ENCODE measurements at regions of chr1 and their contacts with region 1.

Region 1: GRCh38 chr1:84143796-84144565 is at the start of gene PRKACB:
- DNase-seq: peak in 5 of 14 experiments; percentile 7 to 81 (median 76)
- ATAC-seq: peak; percentile 87
- H3K4me3 ChIP-seq: peak within 1 kb of the TSS; percentile 57
- H3K4me3 Mint-ChIP-seq: peak within 1 kb of the TSS; percentile 100
- H3K27ac ChIP-seq: peak within 1 kb of the TSS; percentile 49 to 63
- H3K27ac Mint-ChIP-seq: peak within 1 kb of the TSS; percentile 99
- H3K4me1 ChIP-seq: peaks cover 8% of the 10 kb centered on the region
- H3K4me1 Mint-ChIP-seq: peaks cover 63% of the 10 kb centered on the region
- H3K27me3 ChIP-seq: no peaks in the 10 kb centered on the region
- H3K27me3 Mint-ChIP-seq: no peaks in the 10 kb centered on the region
- CTCF ChIP-seq: no peak
- total RNA-seq, gene PRKACB: 49.7 to 52.4 TPM

Region 2: DNA sequence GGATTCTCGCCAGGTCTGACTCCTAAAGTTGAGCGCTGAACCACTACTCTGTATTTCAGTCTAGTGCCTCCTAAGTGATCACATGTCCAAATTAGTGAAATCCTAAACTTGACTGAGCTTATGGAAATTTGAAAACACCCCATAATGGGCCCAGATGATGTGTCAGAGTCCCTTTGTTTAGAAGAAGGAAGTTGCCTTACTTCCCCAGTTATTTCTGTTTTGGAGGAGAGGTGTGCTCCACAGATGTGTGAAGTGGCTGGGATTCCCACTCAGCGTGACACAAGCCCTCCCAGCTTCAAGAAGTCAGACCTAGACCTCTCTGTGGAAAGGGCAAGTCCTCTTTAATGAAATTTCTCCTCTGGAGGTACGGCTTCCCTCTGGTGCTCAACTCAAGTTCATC is 333.8 kb before region 1 on chr1:
- CTCF ChIA-PET with region 1: no interaction called
- POLR2A ChIA-PET with region 1: no interaction called
- intact Hi-C with region 1: no loop called
- DNase-seq: no peak
- ATAC-seq: no peak
- H3K4me3 ChIP-seq: no peak overlapping the region
- H3K4me3 Mint-ChIP-seq: no peak overlapping the region
- H3K27ac ChIP-seq: no peak overlapping the region
- H3K27ac Mint-ChIP-seq: no peak overlapping the region
- H3K4me1 ChIP-seq: no peaks in the 10 kb centered on the region
- H3K4me1 Mint-ChIP-seq: no peaks in the 10 kb centered on the region
- H3K27me3 ChIP-seq: no peaks in the 10 kb centered on the region
- H3K27me3 Mint-ChIP-seq: no peaks in the 10 kb centered on the region
- CTCF ChIP-seq: no peak

Region 3: DNA sequence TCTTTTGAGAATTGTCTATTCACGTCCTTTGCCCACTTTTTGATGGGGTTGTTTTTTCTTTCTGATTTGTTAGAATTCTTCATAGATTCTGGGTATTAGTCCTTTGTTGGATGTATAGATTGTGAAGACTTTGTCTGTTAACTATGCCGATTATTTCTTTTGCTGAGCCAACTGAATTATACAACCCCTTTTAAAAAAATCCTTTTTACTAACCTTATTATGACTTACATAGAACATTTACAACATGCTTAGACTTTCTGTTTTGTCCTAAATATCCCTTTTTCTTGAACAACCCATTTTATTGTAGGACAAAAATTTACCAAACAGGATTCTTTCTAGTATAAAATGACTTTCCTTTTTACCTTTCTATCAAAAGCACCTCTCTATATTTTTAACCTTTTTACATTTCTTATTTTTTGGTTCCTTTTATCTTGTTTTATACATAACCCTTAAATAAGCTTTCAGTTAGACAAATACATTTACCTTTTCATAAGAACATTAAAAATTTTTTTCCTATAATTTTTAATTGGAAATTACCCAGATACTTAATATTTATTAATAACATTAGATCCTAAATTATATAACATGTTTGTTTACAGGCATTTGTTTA is 74.6 kb before region 1 on chr1:
- CTCF ChIA-PET with region 1: no interaction called
- POLR2A ChIA-PET with region 1: no interaction called
- intact Hi-C with region 1: no loop called
- DNase-seq: no peak
- ATAC-seq: no peak
- H3K4me3 ChIP-seq: no peak overlapping the region
- H3K4me3 Mint-ChIP-seq: no peak overlapping the region
- H3K27ac ChIP-seq: no peak overlapping the region
- H3K27ac Mint-ChIP-seq: no peak overlapping the region
- H3K4me1 ChIP-seq: no peaks in the 10 kb centered on the region
- H3K4me1 Mint-ChIP-seq: no peaks in the 10 kb centered on the region
- H3K27me3 ChIP-seq: peaks cover 2 to 3% of the 10 kb centered on the region in 2 experiments
- H3K27me3 Mint-ChIP-seq: peaks cover 31% of the 10 kb centered on the region
- CTCF ChIP-seq: no peak

Region 4: DNA sequence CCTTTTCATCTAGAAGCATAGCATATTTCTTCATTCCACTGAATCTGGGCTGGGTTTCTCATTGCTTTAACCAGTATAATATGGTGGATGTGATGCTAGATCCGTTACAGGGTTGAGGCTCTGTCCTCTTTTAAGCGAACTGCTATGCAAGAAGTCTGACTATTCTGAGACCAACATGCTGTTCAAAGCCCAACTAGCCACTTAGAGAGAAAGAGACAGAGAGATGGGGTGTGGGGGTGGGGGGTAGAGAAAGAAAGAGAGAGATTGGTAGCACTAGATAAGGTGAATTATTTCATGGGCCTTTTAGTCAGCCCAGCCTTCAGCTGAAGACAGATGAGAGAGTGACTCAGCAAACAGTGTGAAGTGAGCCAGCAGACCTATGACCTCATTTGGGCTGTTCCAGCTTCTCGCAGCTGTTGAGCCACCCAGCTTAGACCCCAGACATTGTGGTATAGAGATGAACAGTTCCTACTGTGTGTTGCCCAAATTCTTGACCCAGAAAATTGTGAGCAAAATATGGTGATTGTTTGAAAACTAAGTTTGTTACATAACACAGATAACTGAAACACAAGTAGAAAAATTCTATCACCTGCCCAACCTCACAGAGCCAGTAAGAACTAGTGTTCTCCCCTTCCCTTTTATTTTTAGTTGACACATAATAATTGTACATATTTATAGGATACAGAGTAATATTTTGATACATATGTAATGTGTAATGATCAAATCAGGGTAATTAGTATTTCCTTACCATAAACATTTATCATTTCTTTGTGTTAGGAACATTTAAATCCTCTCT is 40.6 kb before region 1 on chr1:
- CTCF ChIA-PET with region 1: no interaction called
- POLR2A ChIA-PET with region 1: no interaction called
- intact Hi-C with region 1: no loop called
- DNase-seq: peak in 2 of 14 experiments; percentile 4 to 20
- ATAC-seq: no peak
- H3K4me3 ChIP-seq: no peak overlapping the region
- H3K4me3 Mint-ChIP-seq: no peak overlapping the region
- H3K27ac ChIP-seq: no peak overlapping the region
- H3K27ac Mint-ChIP-seq: no peak overlapping the region
- H3K4me1 ChIP-seq: no peaks in the 10 kb centered on the region
- H3K4me1 Mint-ChIP-seq: no peaks in the 10 kb centered on the region
- H3K27me3 ChIP-seq: no peaks in the 10 kb centered on the region
- H3K27me3 Mint-ChIP-seq: no peaks in the 10 kb centered on the region
- CTCF ChIP-seq: no peak

Region 5: GRCh38 chr1:84156210-84156621 is 12.2 kb after region 1 on chr1:
- CTCF ChIA-PET with region 1: interaction called, 4 read pairs
- POLR2A ChIA-PET with region 1: interaction called, 29 read pairs
- intact Hi-C with region 1: loop called in 1 of 2 experiments (anchors 1 kb)
- DNase-seq: peak in 3 of 14 experiments; percentile 20 to 35 (median 31)
- ATAC-seq: peak; percentile 48
- H3K4me3 ChIP-seq: no peak overlapping the region
- H3K4me3 Mint-ChIP-seq: peak overlapping the region; percentile 45
- H3K27ac ChIP-seq: no peak overlapping the region
- H3K27ac Mint-ChIP-seq: peak overlapping the region; percentile 72
- H3K4me1 ChIP-seq: peaks cover 26% of the 10 kb centered on the region
- H3K4me1 Mint-ChIP-seq: peaks cover 97% of the 10 kb centered on the region
- H3K27me3 ChIP-seq: no peaks in the 10 kb centered on the region
- H3K27me3 Mint-ChIP-seq: no peaks in the 10 kb centered on the region
- CTCF ChIP-seq: no peak

Region 6: GRCh38 chr1:84217239-84217638 is 73.3 kb after region 1 on chr1:
- CTCF ChIA-PET with region 1: no interaction called
- POLR2A ChIA-PET with region 1: interaction called, 3 read pairs
- intact Hi-C with region 1: loop called in 1 of 2 experiments (anchors 5 kb)
- DNase-seq: no peak
- ATAC-seq: no peak
- H3K4me3 ChIP-seq: no peak overlapping the region
- H3K4me3 Mint-ChIP-seq: no peak overlapping the region
- H3K27ac ChIP-seq: no peak overlapping the region
- H3K27ac Mint-ChIP-seq: peak overlapping the region; percentile 2
- H3K4me1 ChIP-seq: no peaks in the 10 kb centered on the region
- H3K4me1 Mint-ChIP-seq: peaks cover 46% of the 10 kb centered on the region
- H3K27me3 ChIP-seq: no peaks in the 10 kb centered on the region
- H3K27me3 Mint-ChIP-seq: no peaks in the 10 kb centered on the region
- CTCF ChIP-seq: no peak

Region 7: GRCh38 chr1:84433258-84434080 is 289.5 kb after region 1 on chr1:
- CTCF ChIA-PET with region 1: interaction called, 24 read pairs
- POLR2A ChIA-PET with region 1: interaction called, 87 read pairs
- intact Hi-C with region 1: loop called (anchors 1 to 2 kb)
- DNase-seq: peak in 12 of 14 experiments; percentile 21 to 91 (median 40)
- ATAC-seq: peak; percentile 79
- H3K4me3 ChIP-seq: peak overlapping the region; percentile 32
- H3K4me3 Mint-ChIP-seq: peak overlapping the region; percentile 68
- H3K27ac ChIP-seq: peak overlapping the region in 1 of 2 donors; percentile 39
- H3K27ac Mint-ChIP-seq: no peak overlapping the region
- H3K4me1 ChIP-seq: peaks cover 25% of the 10 kb centered on the region
- H3K4me1 Mint-ChIP-seq: peaks cover 11% of the 10 kb centered on the region
- H3K27me3 ChIP-seq: no peaks in the 10 kb centered on the region
- H3K27me3 Mint-ChIP-seq: no peaks in the 10 kb centered on the region
- CTCF ChIP-seq: peak; percentile 85

Region 8: DNA sequence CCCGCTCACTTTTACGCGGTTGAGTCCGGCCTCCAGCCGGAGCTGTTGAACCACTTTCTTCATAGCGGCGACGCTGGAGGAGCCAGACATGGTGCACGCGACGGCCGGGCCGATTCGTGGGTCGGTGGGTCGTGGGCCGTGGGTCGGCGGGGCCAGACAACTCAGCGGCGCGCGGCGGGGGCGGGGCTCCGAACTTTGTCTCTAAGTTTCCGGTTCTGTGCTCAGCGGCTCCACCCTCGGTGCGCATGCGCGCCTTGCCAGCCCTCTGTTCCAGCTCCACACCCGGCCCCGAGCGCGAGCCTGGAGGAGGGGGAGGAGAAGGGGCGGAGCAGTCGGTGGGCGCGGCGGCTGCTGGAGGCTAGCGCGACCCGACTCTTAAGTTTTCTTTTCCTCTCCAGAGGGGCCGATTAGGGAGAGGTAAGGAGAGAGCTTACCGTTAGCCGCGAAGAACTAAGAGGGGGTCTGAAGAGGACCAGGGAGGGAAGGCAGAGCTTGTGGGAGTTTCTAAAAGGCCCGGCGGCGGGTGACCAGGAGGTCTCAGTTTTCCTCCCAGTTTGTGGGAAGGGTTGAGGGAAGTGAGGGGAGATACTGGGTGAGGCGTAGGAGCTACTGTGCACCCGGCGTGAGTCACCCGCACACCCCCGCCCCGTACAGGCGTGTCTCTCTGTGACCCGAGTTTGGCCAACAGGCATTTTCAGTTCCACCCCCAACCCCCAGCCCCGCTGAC is 362.2 kb after region 1 on chr1 and contains the starts of genes GNG5 and SPATA1:
- CTCF ChIA-PET with region 1: interaction called, 3 read pairs
- POLR2A ChIA-PET with region 1: interaction called, 27 read pairs
- intact Hi-C with region 1: loop called (anchors 10 kb)
- DNase-seq: peak; percentile 94 to 99 (median 97)
- ATAC-seq: peak; percentile 92
- H3K4me3 ChIP-seq: peak within 1 kb of the TSS; percentile 95
- H3K4me3 Mint-ChIP-seq: peak within 1 kb of the TSS; percentile 96
- H3K27ac ChIP-seq: peak within 1 kb of the TSS; percentile 75 to 91
- H3K27ac Mint-ChIP-seq: peak within 1 kb of the TSS; percentile 88
- H3K4me1 ChIP-seq: peaks cover 21% of the 10 kb centered on the region
- H3K4me1 Mint-ChIP-seq: peaks cover 62% of the 10 kb centered on the region
- H3K27me3 ChIP-seq: no peaks in the 10 kb centered on the region
- H3K27me3 Mint-ChIP-seq: no peaks in the 10 kb centered on the region
- CTCF ChIP-seq: no peak
- total RNA-seq, gene GNG5: 23.6 to 24.6 TPM
- total RNA-seq, gene SPATA1: 0.11 to 0.61 TPM

Region 9: DNA sequence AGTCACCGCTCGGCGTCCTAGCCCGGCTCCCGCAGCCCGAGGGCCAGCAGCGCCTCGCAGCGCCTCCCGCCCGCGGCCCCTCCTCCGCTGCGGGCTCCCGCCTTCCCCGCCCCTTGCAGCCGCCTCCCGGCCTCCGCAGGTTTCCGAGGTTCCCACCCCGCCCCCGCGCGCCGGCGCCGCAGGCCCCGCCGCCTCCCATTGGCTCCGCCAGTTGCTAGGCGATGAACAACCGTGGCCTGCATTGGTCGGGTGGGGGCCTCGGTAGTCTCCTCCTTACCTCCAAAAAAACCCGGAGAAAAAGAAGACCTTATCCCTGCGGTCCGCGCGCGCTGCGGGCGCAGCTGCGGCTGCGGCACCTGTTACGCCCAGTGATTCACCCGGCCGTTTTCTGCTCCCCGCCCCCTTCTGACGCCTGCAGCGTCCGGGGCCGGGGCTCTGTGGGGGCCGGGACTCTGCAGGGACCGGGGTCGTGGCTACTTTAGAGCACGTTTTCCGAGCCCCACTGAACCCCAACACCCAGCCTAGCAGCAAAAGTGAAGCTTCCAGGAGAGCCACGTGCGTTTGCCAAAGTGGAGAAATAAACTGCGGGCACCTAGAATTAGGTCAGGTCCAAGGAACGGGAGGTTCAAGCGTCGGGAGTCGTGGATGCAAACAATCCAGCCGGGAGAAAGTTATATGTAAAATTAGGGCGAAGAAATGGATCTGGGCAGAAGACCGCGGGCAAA is 546.6 kb after region 1 on chr1 and contains the start of gene SSX2IP:
- CTCF ChIA-PET with region 1: interaction called, 3 read pairs
- POLR2A ChIA-PET with region 1: interaction called, 11 read pairs
- intact Hi-C with region 1: loop called (anchors 5 to 10 kb)
- DNase-seq: peak; percentile 99 to 100 (median 100)
- ATAC-seq: peak; percentile 82
- H3K4me3 ChIP-seq: peak within 1 kb of the TSS; percentile 84
- H3K4me3 Mint-ChIP-seq: peak within 1 kb of the TSS; percentile 91
- H3K27ac ChIP-seq: peak within 1 kb of the TSS; percentile 76 to 83
- H3K27ac Mint-ChIP-seq: peak within 1 kb of the TSS; percentile 88
- H3K4me1 ChIP-seq: peaks cover 29% of the 10 kb centered on the region
- H3K4me1 Mint-ChIP-seq: peaks cover 77% of the 10 kb centered on the region
- H3K27me3 ChIP-seq: no peaks in the 10 kb centered on the region
- H3K27me3 Mint-ChIP-seq: no peaks in the 10 kb centered on the region
- CTCF ChIP-seq: no peak
- total RNA-seq, gene SSX2IP: 5.5 to 6.0 TPM

Region 10: GRCh38 chr1:84936116-84936810 is 792.3 kb after region 1 on chr1:
- CTCF ChIA-PET with region 1: interaction called, 4 read pairs
- POLR2A ChIA-PET with region 1: interaction called, 3 read pairs
- intact Hi-C with region 1: loop called (anchors 5 kb)
- DNase-seq: peak in 9 of 14 experiments; percentile 6 to 80 (median 22)
- ATAC-seq: peak; percentile 79
- H3K4me3 ChIP-seq: no peak overlapping the region
- H3K4me3 Mint-ChIP-seq: no peak overlapping the region
- H3K27ac ChIP-seq: no peak overlapping the region
- H3K27ac Mint-ChIP-seq: no peak overlapping the region
- H3K4me1 ChIP-seq: peaks cover 3% of the 10 kb centered on the region
- H3K4me1 Mint-ChIP-seq: no peaks in the 10 kb centered on the region
- H3K27me3 ChIP-seq: no peaks in the 10 kb centered on the region
- H3K27me3 Mint-ChIP-seq: no peaks in the 10 kb centered on the region
- CTCF ChIP-seq: peak; percentile 97

Measured in CD4-positive, alpha-beta T cell (primary cell).